ENCODE measurements at regions of chr9 and their contacts with region 1.

Region 1: GRCh38 chr9:26142631-26143030 is 464.4 kb upstream of the TUSC1 start:
- DNase-seq: no peak
- ATAC-seq: no peak
- H3K4me3 ChIP-seq: no peak overlapping the region
- H3K27ac ChIP-seq: no peak overlapping the region
- H3K4me1 ChIP-seq: no peaks in the 10 kb centered on the region
- H3K27me3 ChIP-seq: no peaks in the 10 kb centered on the region
- CTCF ChIP-seq: no peak
- EP300 ChIP-seq: no peak
- POLR2A ChIP-seq: no peak
- RAD21 ChIP-seq: no peak

Region 2: GRCh38 chr9:26159575-26160392 is 17.2 kb after region 1 on chr9:
- CTCF ChIA-PET with region 1: no interaction called
- POLR2A ChIA-PET with region 1: no interaction called
- RAD21 ChIA-PET with region 1: no interaction called
- SMC1A ChIA-PET with region 1: no interaction called
- in situ Hi-C with region 1: no loop called
- intact Hi-C with region 1: loop called (anchors 1 kb)
- DNase-seq: no peak
- ATAC-seq: no peak
- H3K4me3 ChIP-seq: no peak overlapping the region
- H3K27ac ChIP-seq: no peak overlapping the region
- H3K4me1 ChIP-seq: no peaks in the 10 kb centered on the region
- H3K27me3 ChIP-seq: no peaks in the 10 kb centered on the region
- CTCF ChIP-seq: no peak
- EP300 ChIP-seq: no peak
- POLR2A ChIP-seq: no peak
- RAD21 ChIP-seq: no peak

Region 3: DNA sequence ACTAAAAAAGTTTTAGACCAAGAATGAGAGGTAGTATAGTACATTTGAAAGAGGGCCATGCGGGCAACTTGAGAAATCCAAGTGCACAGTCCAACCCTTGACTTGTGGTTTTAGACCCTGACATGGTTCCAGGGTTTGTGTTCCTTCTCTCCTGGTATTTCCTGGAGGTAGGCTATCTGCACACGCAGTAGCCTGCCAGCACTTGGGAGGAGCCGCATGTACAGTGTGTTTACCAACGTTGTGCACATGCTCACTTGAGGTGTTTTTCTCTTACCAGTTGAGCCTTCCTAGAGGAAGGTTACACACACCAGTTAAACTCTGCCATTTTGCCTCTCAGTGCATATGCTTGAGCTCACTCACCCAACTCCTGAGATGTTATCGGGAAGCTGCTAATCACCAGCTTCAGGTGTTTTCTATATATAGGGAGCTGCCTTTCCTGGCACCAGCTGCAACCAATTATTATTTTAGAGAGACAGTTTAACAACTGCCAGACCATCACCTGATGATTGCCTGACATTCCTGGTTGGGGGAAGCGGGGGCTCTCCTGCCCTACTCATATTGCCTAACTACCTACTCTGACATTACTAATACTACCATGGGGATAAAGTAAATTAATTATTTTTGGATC is 129.0 kb after region 1 on chr9:
- CTCF ChIA-PET with region 1: no interaction called
- POLR2A ChIA-PET with region 1: no interaction called
- RAD21 ChIA-PET with region 1: no interaction called
- SMC1A ChIA-PET with region 1: no interaction called
- in situ Hi-C with region 1: no loop called
- intact Hi-C with region 1: no loop called
- DNase-seq: no peak
- ATAC-seq: no peak
- H3K4me3 ChIP-seq: no peak overlapping the region
- H3K27ac ChIP-seq: no peak overlapping the region
- H3K4me1 ChIP-seq: no peaks in the 10 kb centered on the region
- H3K27me3 ChIP-seq: no peaks in the 10 kb centered on the region
- CTCF ChIP-seq: no peak
- EP300 ChIP-seq: no peak
- POLR2A ChIP-seq: no peak
- RAD21 ChIP-seq: no peak

Region 4: GRCh38 chr9:26356491-26356890 is 213.9 kb after region 1 on chr9:
- CTCF ChIA-PET with region 1: no interaction called
- POLR2A ChIA-PET with region 1: no interaction called
- RAD21 ChIA-PET with region 1: no interaction called
- SMC1A ChIA-PET with region 1: no interaction called
- in situ Hi-C with region 1: no loop called
- intact Hi-C with region 1: no loop called
- DNase-seq: no peak
- ATAC-seq: no peak
- H3K4me3 ChIP-seq: no peak overlapping the region
- H3K27ac ChIP-seq: no peak overlapping the region
- H3K4me1 ChIP-seq: no peaks in the 10 kb centered on the region
- H3K27me3 ChIP-seq: no peaks in the 10 kb centered on the region
- CTCF ChIP-seq: no peak
- EP300 ChIP-seq: no peak
- POLR2A ChIP-seq: no peak
- RAD21 ChIP-seq: no peak

Region 5: GRCh38 chr9:28024676-28025075 is 1882.0 kb after region 1 on chr9:
- CTCF ChIA-PET with region 1: no interaction called
- POLR2A ChIA-PET with region 1: no interaction called
- RAD21 ChIA-PET with region 1: no interaction called
- SMC1A ChIA-PET with region 1: no interaction called
- in situ Hi-C with region 1: no loop called
- intact Hi-C with region 1: no loop called
- DNase-seq: no peak
- ATAC-seq: no peak
- H3K4me3 ChIP-seq: no peak overlapping the region
- H3K27ac ChIP-seq: no peak overlapping the region
- H3K4me1 ChIP-seq: no peaks in the 10 kb centered on the region
- H3K27me3 ChIP-seq: no peaks in the 10 kb centered on the region
- CTCF ChIP-seq: no peak
- EP300 ChIP-seq: no peak
- POLR2A ChIP-seq: no peak
- RAD21 ChIP-seq: no peak